CD4-positive, alpha-beta T cell (primary cell): ENCODE measurements at regions of chr3 and their contacts with region 1.

Region 1: GRCh38 chr3:13012228-13012691 is 61.0 kb downstream of the IQSEC1 start:
- DNase-seq: peak in 11 of 14 experiments; percentile 15 to 86 (median 30)
- ATAC-seq: no peak
- H3K4me3 ChIP-seq: peak overlapping the region; percentile 63
- H3K4me3 Mint-ChIP-seq: peak overlapping the region; percentile 84
- H3K27ac ChIP-seq: peak overlapping the region; percentile 87 to 99
- H3K27ac Mint-ChIP-seq: peak overlapping the region; percentile 98
- H3K4me1 ChIP-seq: peaks cover 100% of the 10 kb centered on the region
- H3K4me1 Mint-ChIP-seq: peaks cover 93% of the 10 kb centered on the region
- H3K27me3 ChIP-seq: no peaks in the 10 kb centered on the region
- H3K27me3 Mint-ChIP-seq: no peaks in the 10 kb centered on the region
- CTCF ChIP-seq: no peak

Region 2: DNA sequence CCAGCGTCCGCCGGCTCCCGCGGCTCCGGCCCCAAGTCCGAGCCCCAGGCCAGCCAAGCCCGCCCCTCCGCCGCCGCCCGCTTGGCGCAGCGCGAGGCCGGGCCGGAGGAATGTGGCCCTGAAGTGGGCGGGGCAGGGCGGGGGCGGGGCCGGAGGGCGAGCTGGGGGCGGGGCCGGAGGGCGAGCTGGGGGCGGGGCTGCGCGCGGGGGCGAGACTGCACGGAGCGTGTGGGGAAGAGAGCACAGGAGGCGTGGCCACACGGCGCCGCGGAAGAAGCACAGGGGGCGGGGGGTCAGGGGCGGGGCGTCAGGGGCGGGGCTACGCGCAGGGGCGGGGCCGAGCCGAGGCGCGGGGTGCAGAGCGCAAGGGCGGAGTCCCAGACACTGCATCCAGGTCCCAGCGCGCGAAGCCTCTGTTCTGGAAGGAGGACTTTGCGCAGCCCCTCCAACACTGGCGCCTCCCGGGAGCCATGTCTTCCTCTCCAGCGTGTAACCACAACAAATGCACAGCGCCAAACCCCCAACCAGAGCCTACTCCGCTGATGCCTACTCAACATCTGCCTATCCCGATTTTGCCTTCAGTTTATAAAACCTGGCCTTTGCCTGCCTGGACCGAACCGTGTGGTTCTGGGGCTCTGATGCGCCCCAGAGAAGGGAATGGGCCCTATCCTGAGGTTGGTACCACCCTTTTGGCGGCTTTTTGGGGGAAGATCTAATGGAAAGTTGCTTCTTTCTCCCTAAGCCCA is 44.5 kb before region 1 on chr3:
- CTCF ChIA-PET with region 1: no interaction called
- POLR2A ChIA-PET with region 1: interaction called, 3 read pairs
- intact Hi-C with region 1: loop called in 1 of 2 experiments (anchors 5 kb)
- DNase-seq: peak; percentile 82 to 97 (median 88)
- ATAC-seq: peak; percentile 95
- H3K4me3 ChIP-seq: peak overlapping the region; percentile 47
- H3K4me3 Mint-ChIP-seq: peak overlapping the region; percentile 80
- H3K27ac ChIP-seq: no peak overlapping the region
- H3K27ac Mint-ChIP-seq: peak overlapping the region; percentile 67
- H3K4me1 ChIP-seq: peaks cover 65% of the 10 kb centered on the region
- H3K4me1 Mint-ChIP-seq: peaks cover 78% of the 10 kb centered on the region
- H3K27me3 ChIP-seq: no peaks in the 10 kb centered on the region
- H3K27me3 Mint-ChIP-seq: no peaks in the 10 kb centered on the region
- CTCF ChIP-seq: no peak

Region 3: DNA sequence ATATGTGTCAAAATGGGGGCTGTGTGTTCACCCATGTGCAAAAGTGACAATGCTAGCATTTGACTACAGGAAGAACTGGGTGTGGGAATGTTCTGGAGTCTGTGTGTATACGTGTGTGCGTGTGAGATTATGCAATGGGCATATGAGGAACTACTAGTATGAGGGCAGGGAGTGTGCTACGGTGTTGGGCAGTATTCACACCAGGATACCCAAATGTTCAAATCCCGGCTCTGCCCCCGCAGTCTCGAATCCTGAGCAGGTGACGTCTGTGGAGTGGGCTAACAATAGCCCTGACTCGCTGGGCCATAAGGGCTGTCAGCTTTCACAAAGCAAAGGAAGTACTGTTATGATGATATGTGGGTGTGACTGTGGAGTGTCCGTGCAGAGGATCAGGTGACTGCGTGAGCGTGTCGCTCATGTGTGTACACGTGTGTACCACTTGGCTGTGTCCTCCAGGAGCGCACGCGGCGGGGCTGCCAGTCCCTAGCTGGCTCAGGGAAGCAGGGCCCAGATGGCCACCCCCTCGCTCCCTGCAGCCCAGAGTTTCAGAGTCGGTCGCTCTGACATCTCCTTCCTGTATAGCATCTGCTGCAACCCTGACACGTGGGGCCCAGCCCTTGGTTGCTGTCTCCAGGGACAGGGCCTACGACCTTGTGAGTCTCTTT is 33.8 kb after region 1 on chr3:
- CTCF ChIA-PET with region 1: no interaction called
- POLR2A ChIA-PET with region 1: interaction called, 3 read pairs
- intact Hi-C with region 1: loop called in 1 of 2 experiments (anchors 2 kb)
- DNase-seq: peak in 4 of 14 experiments; percentile 10 to 49 (median 30)
- ATAC-seq: peak; percentile 41
- H3K4me3 ChIP-seq: no peak overlapping the region
- H3K4me3 Mint-ChIP-seq: peak overlapping the region; percentile 17
- H3K27ac ChIP-seq: no peak overlapping the region
- H3K27ac Mint-ChIP-seq: peak overlapping the region; percentile 28
- H3K4me1 ChIP-seq: peaks cover 11% of the 10 kb centered on the region
- H3K4me1 Mint-ChIP-seq: peaks cover 14% of the 10 kb centered on the region
- H3K27me3 ChIP-seq: no peaks in the 10 kb centered on the region
- H3K27me3 Mint-ChIP-seq: no peaks in the 10 kb centered on the region
- CTCF ChIP-seq: no peak

Region 4: DNA sequence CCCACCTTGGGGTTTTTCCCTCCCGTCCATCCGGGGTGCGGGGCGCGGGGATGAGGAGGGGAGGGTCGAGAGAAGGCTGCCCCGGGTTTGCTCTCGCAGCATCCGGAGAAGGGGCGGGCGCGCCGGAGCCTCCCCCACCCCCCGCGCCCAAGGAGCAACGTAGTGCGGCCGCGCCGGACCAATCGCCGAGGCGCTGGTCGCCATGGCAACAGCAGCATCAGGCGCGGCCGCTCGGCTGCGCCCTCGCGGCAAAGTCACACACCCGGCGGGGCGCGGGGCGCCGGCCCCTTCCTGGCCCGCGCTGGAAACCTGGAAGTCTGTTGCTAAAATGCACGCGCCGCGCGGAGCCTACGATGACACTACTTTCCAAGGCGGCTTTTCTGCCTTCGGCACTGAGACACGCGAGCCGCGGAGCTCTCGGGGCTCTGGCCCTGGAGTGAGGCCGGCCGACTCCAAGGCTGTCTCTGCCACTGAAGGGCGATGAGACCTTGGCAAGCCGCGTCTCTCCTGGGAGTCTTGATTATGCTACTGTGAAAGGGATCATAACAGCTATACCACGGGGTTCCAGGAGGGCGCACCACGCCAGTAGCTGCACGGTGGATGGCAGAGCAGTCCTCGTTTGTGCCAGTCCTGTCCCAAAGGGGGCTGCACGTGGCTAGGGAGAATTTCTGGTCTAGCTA is 61.2 kb after region 1 on chr3 and contains the start of gene IQSEC1:
- CTCF ChIA-PET with region 1: no interaction called
- POLR2A ChIA-PET with region 1: interaction called, 3 read pairs
- intact Hi-C with region 1: loop called in 1 of 2 experiments (anchors 5 kb)
- DNase-seq: peak; percentile 26 to 88 (median 66)
- ATAC-seq: peak; percentile 69
- H3K4me3 ChIP-seq: peak within 1 kb of the TSS; percentile 44
- H3K4me3 Mint-ChIP-seq: peak within 1 kb of the TSS; percentile 83
- H3K27ac ChIP-seq: no peak within 1 kb of the TSS
- H3K27ac Mint-ChIP-seq: no peak within 1 kb of the TSS
- H3K4me1 ChIP-seq: peaks cover 41% of the 10 kb centered on the region
- H3K4me1 Mint-ChIP-seq: peaks cover 35% of the 10 kb centered on the region
- H3K27me3 ChIP-seq: peaks cover 17 to 20% of the 10 kb centered on the region in 2 experiments
- H3K27me3 Mint-ChIP-seq: peaks cover 26% of the 10 kb centered on the region
- CTCF ChIP-seq: no peak
- total RNA-seq, gene IQSEC1: 102 to 108 TPM